Naive thymus-derived CD8-positive, alpha-beta T cell (primary cell): ENCODE measurements at regions of chr3 and their contacts with region 1.

Region 1: DNA sequence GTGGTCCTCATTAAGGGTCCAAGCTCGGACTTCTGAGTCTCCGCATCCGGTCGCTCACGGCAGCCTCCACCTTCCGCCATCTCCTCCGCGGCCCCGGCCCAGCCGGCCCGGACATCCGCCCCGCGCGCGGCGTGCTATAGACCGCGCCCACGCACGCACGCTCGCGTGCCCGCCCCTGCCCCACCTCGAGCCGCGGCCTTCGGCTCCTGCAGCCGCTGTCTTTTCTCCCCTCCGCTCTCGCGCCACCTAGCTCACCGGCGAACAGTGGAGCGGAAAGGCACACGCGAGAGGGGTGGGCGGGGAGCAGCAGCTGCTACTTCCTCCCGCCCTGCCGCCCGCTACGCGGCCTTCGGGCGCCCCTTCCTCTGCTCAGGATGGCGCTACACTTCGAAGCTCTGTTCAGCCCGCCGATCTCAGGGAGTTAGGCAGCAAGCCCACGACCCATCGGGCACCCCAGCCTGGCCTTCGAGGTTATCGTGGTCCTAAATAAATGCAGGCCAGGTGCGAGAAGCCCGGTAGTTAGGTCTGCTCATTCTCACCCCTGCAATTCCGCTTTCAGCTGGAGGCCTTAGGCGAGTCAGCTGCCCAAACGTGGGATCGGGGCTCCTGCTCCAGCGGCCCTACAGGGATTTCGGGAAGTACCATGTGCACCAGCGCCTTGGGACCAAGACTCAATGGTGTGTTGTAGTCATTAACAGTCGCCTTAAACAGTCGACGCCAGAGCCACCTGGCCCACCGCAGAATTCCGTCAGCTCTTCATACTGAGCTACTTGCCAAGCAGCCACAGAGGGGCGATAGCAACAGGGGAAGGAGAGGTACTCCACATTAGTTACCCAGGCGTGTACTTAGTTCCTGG is at the start of gene USP4:
- DNase-seq: peak; percentile 81 to 96 (median 88)
- ATAC-seq: peak; percentile 87 to 89
- H3K4me3 Mint-ChIP-seq: peak within 1 kb of the TSS; percentile 82 to 99 (median 92)
- H3K27ac Mint-ChIP-seq: peak within 1 kb of the TSS; percentile 97 to 99 (median 98)
- H3K4me1 Mint-ChIP-seq: peaks cover 30 to 57% (median 45%) of the 10 kb centered on the region in 4 donors
- H3K27me3 Mint-ChIP-seq: no peaks in the 10 kb centered on the region
- polyA plus RNA-seq, gene USP4: 49.6 to 69.1 (median 50.6) TPM

Region 2: GRCh38 chr3:49351521-49352011 is 11.4 kb after region 1 on chr3:
- POLR2A ChIA-PET with region 1: interaction called, 69 read pairs
- DNase-seq: no peak
- ATAC-seq: no peak
- H3K4me3 Mint-ChIP-seq: peak overlapping the region in 1 of 10 donors; percentile 45
- H3K27ac Mint-ChIP-seq: peak overlapping the region in 8 of 10 donors; percentile 2 to 89 (median 46)
- H3K4me1 Mint-ChIP-seq: peaks cover 11 to 60% (median 20%) of the 10 kb centered on the region in 4 donors
- H3K27me3 Mint-ChIP-seq: no peaks in the 10 kb centered on the region

Region 3: DNA sequence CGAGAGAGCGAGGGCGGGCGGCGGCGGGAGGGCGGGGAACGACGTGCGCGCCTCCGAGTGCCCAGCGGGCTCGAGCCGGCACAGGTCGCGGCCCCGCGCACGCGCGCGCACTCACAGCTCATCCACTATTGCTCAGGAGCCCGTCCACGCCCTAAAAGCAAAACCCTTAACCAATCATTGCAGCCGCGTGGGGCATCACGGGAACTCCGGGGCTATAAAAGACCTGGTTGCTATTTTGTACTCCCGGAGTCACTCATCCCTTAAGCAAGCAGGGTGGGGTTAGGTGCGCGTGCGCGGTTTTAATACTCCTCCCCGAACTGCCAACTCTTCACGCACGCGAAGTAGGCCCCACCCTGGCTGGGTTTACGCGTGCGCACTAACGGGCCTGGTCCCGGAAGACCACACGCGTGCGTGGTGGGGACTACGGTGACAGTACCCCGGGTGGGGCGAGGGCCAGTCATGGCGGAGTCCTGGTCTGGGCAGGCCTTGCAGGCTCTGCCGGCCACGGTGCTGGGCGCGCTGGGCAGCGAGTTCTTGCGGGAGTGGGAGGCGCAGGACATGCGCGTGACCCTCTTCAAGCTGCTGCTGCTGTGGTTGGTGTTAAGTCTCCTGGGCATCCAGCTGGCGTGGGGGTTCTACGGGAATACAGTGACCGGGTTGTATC is 71.9 kb after region 1 on chr3 and contains the starts of genes RHOA and TCTA:
- POLR2A ChIA-PET with region 1: interaction called, 75 read pairs
- DNase-seq: peak; percentile 96 to 100 (median 99)
- ATAC-seq: peak; percentile 87 to 89
- H3K4me3 Mint-ChIP-seq: peak within 1 kb of the TSS; percentile 80 to 95 (median 93)
- H3K27ac Mint-ChIP-seq: peak within 1 kb of the TSS; percentile 91 to 96 (median 95)
- H3K4me1 Mint-ChIP-seq: peaks cover 35 to 83% (median 69%) of the 10 kb centered on the region in 4 donors
- H3K27me3 Mint-ChIP-seq: no peaks in the 10 kb centered on the region
- polyA plus RNA-seq, gene RHOA: 478 to 683 (median 552) TPM
- polyA plus RNA-seq, gene TCTA: 37.6 to 48.8 (median 45.5) TPM

Region 4: DNA sequence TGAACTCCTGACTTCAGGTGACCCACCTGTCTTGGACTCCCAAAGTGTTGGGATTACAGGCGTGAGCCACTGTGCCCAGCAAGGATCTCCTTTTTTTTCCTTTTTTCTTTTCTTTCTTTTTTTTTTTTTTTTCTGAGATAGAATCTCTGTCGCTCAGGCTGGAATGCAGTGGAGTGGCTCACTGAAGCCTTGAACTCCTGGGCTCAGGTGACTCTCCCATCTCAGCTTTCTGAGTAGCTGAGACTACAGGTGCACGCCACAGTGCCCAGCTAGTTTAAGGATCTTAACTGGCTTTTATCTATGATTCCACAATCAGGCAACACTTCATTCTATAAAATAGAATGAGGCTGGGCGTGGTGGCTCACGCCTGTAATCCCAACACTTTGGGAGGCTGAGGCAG is 105.2 kb after region 1 on chr3:
- POLR2A ChIA-PET with region 1: interaction called, 35 read pairs
- DNase-seq: no peak
- ATAC-seq: no peak
- H3K4me3 Mint-ChIP-seq: peak overlapping the region in 1 of 10 donors; percentile 19
- H3K27ac Mint-ChIP-seq: peak overlapping the region in 7 of 10 donors; percentile 34 to 81 (median 46)
- H3K4me1 Mint-ChIP-seq: peaks cover 3 to 28% (median 16%) of the 10 kb centered on the region in 4 donors
- H3K27me3 Mint-ChIP-seq: no peaks in the 10 kb centered on the region

Region 5: DNA sequence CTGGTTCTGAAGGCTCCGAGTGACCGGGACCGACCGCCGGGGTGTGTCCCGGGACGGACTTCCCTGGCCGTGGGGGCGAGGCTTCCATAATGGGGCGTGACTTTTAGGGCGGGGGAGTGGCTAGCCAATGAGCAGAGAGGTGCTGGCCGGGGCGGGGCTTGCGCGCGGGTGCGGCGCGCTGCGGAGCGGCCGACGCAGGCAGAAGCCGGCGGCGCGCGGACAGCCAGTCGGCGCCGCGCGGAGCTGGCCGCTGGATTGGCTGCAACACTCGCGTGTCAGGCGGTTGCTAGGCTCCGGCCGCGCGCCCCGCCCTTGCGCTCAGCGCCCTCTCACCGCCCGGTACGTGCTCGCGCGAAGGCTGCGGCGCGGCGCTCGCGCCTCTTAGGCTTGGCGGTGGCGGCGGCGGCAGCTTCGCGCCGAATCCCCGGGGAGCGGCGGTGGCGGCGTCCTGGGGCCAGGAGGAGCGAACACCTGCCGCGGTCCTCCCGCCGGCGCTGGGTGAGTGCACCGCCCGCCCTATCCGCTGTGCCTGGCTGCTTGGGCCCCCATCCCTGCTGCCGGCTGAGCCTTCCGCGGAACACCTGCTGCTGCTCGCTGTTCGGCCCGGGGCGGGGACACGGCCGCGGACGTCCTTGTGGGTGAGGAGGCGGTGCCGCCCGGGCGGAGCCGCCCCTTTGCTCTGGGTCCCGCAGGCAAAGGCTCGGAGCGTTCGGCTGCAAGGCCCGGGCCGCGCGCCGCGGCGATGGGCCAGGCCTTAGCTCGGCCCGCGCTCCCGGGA is 130.0 kb after region 1 on chr3 and contains the start of gene DAG1:
- POLR2A ChIA-PET with region 1: interaction called, 33 read pairs
- DNase-seq: peak; percentile 91 to 97 (median 94)
- ATAC-seq: peak; percentile 85 to 87
- H3K4me3 Mint-ChIP-seq: peak within 1 kb of the TSS; percentile 84 to 94 (median 91)
- H3K27ac Mint-ChIP-seq: peak within 1 kb of the TSS; percentile 90 to 97 (median 95)
- H3K4me1 Mint-ChIP-seq: peaks cover 15 to 34% (median 21%) of the 10 kb centered on the region in 4 donors
- H3K27me3 Mint-ChIP-seq: no peaks in the 10 kb centered on the region
- polyA plus RNA-seq, gene DAG1: 4.6 to 6.4 (median 4.7) TPM